Activated naive CD4-positive, alpha-beta T cell treated with anti-CD3 and anti-CD28 coated beads for 36 hours (primary cell): ENCODE measurements at regions of chr17 and their contacts with region 1.

Region 1: DNA sequence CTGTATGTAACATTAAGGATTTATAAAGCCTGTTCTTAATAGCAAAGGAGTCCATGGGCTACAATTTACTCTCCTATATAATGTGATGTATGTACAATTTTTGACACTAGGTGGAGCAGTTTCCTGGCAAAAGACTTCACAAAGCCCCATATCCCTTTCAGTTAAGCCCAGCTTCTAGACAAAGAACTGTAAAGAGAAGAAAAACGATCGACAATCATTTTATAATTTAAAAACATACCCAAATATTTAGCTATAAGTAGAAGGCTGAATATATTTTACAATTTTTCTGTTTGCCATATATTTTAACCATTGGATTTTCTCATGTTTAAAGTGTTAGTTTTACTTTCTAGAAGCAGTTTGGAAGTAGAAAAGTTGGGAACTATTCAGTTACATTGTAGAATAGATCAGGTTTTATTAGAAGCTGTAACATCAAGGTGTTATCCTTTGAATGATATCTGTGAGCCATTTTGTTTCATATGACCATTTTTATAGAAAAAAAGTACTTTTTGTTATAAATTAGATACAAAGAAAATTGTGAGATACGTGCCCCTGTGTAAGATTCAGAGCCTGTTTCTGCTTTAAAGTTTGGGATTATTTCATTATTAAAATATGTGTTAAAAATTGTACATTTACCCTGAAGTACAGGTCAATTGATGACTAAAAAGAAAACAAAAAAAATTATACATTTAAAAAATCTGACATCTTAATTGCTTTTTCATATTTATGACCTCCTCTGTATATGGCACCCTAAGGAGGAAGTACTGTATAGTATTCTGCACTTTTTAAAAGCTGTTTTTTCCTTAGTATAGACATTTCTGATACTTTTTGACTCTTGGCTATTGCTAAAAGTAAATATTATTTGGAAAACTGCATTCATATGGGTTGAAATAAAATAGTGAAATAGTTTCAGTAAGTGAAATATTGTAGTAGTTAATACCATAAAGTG is 46.3 kb downstream of the VMP1 start:
- DNase-seq: no peak
- H3K4me3 Mint-ChIP-seq: peak overlapping the region; percentile 62
- H3K27ac Mint-ChIP-seq: peak overlapping the region; percentile 98
- H3K4me1 Mint-ChIP-seq: peaks cover 63% of the 10 kb centered on the region
- H3K27me3 Mint-ChIP-seq: no peaks in the 10 kb centered on the region

Region 2: DNA sequence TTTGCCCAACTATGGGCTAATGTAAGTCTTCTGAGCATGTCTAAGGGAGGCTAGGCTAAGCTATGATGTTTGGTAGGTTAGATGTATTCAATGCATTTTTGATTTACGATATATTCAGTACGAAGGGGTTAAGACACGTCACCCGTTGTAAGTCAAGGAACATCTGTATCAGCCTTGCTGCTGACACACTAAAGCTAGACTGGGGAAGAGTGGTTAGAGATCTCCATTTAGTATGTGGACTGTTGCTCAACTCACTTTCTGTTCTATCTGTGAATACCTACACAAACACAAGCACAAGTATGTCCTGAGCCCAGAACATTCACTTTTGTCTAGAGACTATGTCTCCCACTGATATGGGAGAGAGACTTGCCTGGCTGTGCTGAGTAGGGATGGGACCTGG is 25.2 kb after region 1 on chr17:
- CTCF ChIA-PET with region 1: interaction called, 63 read pairs
- intact Hi-C with region 1: no loop called
- DNase-seq: no peak
- H3K4me3 Mint-ChIP-seq: no peak overlapping the region
- H3K27ac Mint-ChIP-seq: peak overlapping the region; percentile 84
- H3K4me1 Mint-ChIP-seq: peaks cover 59% of the 10 kb centered on the region
- H3K27me3 Mint-ChIP-seq: no peaks in the 10 kb centered on the region

Region 3: GRCh38 chr17:59829217-59830006 is 75.6 kb after region 1 on chr17:
- CTCF ChIA-PET with region 1: interaction called, 24 read pairs
- intact Hi-C with region 1: loop called (anchors 1 kb)
- DNase-seq: peak; percentile 79
- H3K4me3 Mint-ChIP-seq: peak overlapping the region; percentile 77
- H3K27ac Mint-ChIP-seq: peak overlapping the region; percentile 99
- H3K4me1 Mint-ChIP-seq: peaks cover 85% of the 10 kb centered on the region
- H3K27me3 Mint-ChIP-seq: no peaks in the 10 kb centered on the region

Region 4: GRCh38 chr17:59846394-59847165 is 92.8 kb after region 1 on chr17:
- CTCF ChIA-PET with region 1: interaction called, 49 read pairs
- intact Hi-C with region 1: loop called (anchors 1 kb)
- DNase-seq: peak; percentile 53
- H3K4me3 Mint-ChIP-seq: peak overlapping the region; percentile 28
- H3K27ac Mint-ChIP-seq: peak overlapping the region; percentile 100
- H3K4me1 Mint-ChIP-seq: peaks cover 76% of the 10 kb centered on the region
- H3K27me3 Mint-ChIP-seq: no peaks in the 10 kb centered on the region

Region 5: GRCh38 chr17:59859444-59860025 is 105.7 kb after region 1 on chr17:
- CTCF ChIA-PET with region 1: interaction called, 3 read pairs
- intact Hi-C with region 1: loop called (anchors 1 kb)
- DNase-seq: no peak
- H3K4me3 Mint-ChIP-seq: no peak overlapping the region
- H3K27ac Mint-ChIP-seq: peak overlapping the region; percentile 65
- H3K4me1 Mint-ChIP-seq: peaks cover 21% of the 10 kb centered on the region
- H3K27me3 Mint-ChIP-seq: no peaks in the 10 kb centered on the region

Region 6: GRCh38 chr17:60036796-60037612 is 283.2 kb after region 1 on chr17:
- CTCF ChIA-PET with region 1: no interaction called
- intact Hi-C with region 1: loop called (anchors 5 kb)
- DNase-seq: peak; percentile 75
- H3K4me3 Mint-ChIP-seq: no peak overlapping the region
- H3K27ac Mint-ChIP-seq: no peak overlapping the region
- H3K4me1 Mint-ChIP-seq: peaks cover 4% of the 10 kb centered on the region
- H3K27me3 Mint-ChIP-seq: peaks cover 17% of the 10 kb centered on the region